Dorsolateral prefrontal cortex (tissue), 120 donors: ENCODE measurements at regions of chr20 and their contacts with region 1.

Region 1: GRCh38 chr20:37693635-37694626 is at the start of gene CTNNBL1:
- DNase-seq: peak; percentile 94 to 97 (median 96)
- H3K4me3 ChIP-seq: peak within 1 kb of the TSS; percentile 70 to 99 (median 92)
- H3K27ac ChIP-seq: peak within 1 kb of the TSS in 34 of 59 donors; percentile 4 to 87 (median 52)
- H3K27me3 ChIP-seq: peaks cover 0 to 5% (median 0%) of the 10 kb centered on the region in 45 donors
- CTCF ChIP-seq: peak in 49 of 56 donors; percentile 8 to 63 (median 35)
- total RNA-seq, gene CTNNBL1: 24.9 to 52.4 (median 41.0) TPM

Region 2: GRCh38 chr20:37726971-37727956 is 33.3 kb after region 1 on chr20:
- intact Hi-C with region 1: loop called in 1 of 2 experiments (anchors 5 kb)
- DNase-seq: no peak
- H3K4me3 ChIP-seq: no peak overlapping the region
- H3K27ac ChIP-seq: peak overlapping the region in 56 of 59 donors; percentile 2 to 87 (median 68)
- H3K27me3 ChIP-seq: no peaks in the 10 kb centered on the region
- CTCF ChIP-seq: no peak

Region 3: DNA sequence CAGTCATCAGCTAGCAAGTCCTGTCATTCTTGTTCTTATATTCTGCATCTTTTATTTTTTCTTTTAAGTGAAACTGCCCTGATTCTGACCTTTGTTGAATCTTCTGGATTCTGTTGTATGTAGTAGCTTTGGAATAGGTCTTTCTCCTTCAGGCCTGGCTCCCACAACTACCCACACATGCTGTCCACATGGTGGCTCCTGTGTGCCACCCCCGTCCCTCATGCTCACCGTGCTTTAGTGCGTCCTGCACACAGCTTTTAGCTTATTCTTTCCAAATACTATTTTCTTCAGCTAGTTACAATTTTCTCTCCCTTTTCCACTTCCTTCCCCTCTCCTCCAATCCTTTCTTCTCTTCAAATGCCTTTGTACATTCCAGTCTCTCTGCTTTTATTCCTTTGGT is 61.7 kb after region 1 on chr20:
- intact Hi-C with region 1: no loop called
- DNase-seq: peak in 9 of 10 donors; percentile 14 to 64 (median 52)
- H3K4me3 ChIP-seq: no peak overlapping the region
- H3K27ac ChIP-seq: peak overlapping the region in 2 of 59 donors; percentile 23 to 29
- H3K27me3 ChIP-seq: no peaks in the 10 kb centered on the region
- CTCF ChIP-seq: peak in 46 of 56 donors; percentile 17 to 64 (median 38)

Region 4: GRCh38 chr20:37770908-37771307 is 77.0 kb after region 1 on chr20:
- intact Hi-C with region 1: no loop called
- DNase-seq: no peak
- H3K4me3 ChIP-seq: no peak overlapping the region
- H3K27ac ChIP-seq: no peak overlapping the region
- H3K27me3 ChIP-seq: no peaks in the 10 kb centered on the region
- CTCF ChIP-seq: no peak

Region 5: GRCh38 chr20:37804584-37805566 is 110.9 kb after region 1 on chr20:
- intact Hi-C with region 1: loop called in 1 of 2 experiments (anchors 10 kb)
- DNase-seq: peak in 9 of 10 donors; percentile 22 to 70 (median 54)
- H3K4me3 ChIP-seq: peak overlapping the region in 1 of 59 donors; percentile 1
- H3K27ac ChIP-seq: peak overlapping the region in 54 of 59 donors; percentile 9 to 86 (median 67)
- H3K27me3 ChIP-seq: no peaks in the 10 kb centered on the region
- CTCF ChIP-seq: no peak

Region 6: GRCh38 chr20:37845241-37845711 is 151.3 kb after region 1 on chr20:
- intact Hi-C with region 1: no loop called
- DNase-seq: no peak
- H3K4me3 ChIP-seq: no peak overlapping the region
- H3K27ac ChIP-seq: no peak overlapping the region
- H3K27me3 ChIP-seq: no peaks in the 10 kb centered on the region
- CTCF ChIP-seq: no peak

Region 7: DNA sequence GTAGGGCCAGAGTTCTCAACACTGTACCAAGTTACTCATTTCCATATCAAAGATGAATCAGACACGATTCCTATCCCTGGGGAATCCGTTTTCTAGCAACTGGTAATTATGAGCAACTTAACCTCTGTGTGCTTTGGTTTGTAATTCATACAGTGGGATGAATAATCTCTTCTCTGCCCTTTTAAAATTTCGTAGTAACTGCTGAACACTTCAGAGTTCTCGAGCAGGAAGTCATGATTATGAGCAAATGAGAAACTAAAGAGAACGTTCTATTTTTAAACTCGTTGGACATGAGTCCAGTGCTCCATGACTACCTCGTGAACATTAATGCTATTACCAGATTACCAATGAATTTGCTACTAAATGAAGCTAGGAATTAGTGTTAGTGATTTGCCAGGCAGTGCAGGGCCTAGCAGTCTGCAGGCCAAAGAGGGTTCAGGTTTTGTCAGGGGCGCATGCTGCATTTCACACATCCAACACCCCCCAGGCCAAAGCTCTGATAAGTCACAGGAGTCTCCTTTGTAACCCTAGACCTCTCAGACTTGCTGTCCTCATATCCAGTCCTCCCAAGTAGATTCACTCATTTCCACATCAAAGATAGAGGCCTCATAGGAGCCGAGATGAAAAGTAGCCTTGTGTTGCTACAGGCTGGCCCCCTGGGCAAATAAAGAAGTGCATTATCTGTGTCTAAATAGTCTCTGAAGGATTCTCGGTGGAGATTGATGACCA is 163.2 kb after region 1 on chr20:
- intact Hi-C with region 1: no loop called
- DNase-seq: no peak
- H3K4me3 ChIP-seq: no peak overlapping the region
- H3K27ac ChIP-seq: no peak overlapping the region
- H3K27me3 ChIP-seq: no peaks in the 10 kb centered on the region
- CTCF ChIP-seq: no peak

Region 8: GRCh38 chr20:37901654-37902503 is 207.9 kb after region 1 on chr20:
- intact Hi-C with region 1: loop called in 1 of 2 experiments (anchors 10 kb)
- DNase-seq: peak in 6 of 10 donors; percentile 25 to 65 (median 46)
- H3K4me3 ChIP-seq: peak overlapping the region in 52 of 59 donors; percentile 39 to 72 (median 58)
- H3K27ac ChIP-seq: no peak overlapping the region
- H3K27me3 ChIP-seq: peaks cover 0 to 48% (median 16%) of the 10 kb centered on the region in 45 donors
- CTCF ChIP-seq: peak in 47 of 56 donors; percentile 17 to 50 (median 35)

Region 9: GRCh38 chr20:38472513-38473372 is 778.8 kb after region 1 on chr20 and contains the start of gene RALGAPB:
- intact Hi-C with region 1: loop called in 1 of 2 experiments (anchors 10 kb)
- DNase-seq: peak; percentile 94 to 98 (median 97)
- H3K4me3 ChIP-seq: peak within 1 kb of the TSS; percentile 61 to 98 (median 89)
- H3K27ac ChIP-seq: peak within 1 kb of the TSS; percentile 9 to 91 (median 83)
- H3K27me3 ChIP-seq: no peaks in the 10 kb centered on the region
- CTCF ChIP-seq: peak in 55 of 56 donors; percentile 30 to 77 (median 58)
- total RNA-seq, gene RALGAPB: 40.2 to 59.9 (median 49.0) TPM